ENCODE measurements at regions of chr7 and their contacts with region 1.

Region 1: GRCh38 chr7:50610521-50611277 is 45.5 kb upstream of the DDC start:
- DNase-seq: peak; percentile 34
- H3K4me3 Mint-ChIP-seq: no peak overlapping the region
- H3K27ac Mint-ChIP-seq: no peak overlapping the region
- H3K4me1 Mint-ChIP-seq: peaks cover 37% of the 10 kb centered on the region
- H3K27me3 Mint-ChIP-seq: peaks cover 18% of the 10 kb centered on the region

Region 2: DNA sequence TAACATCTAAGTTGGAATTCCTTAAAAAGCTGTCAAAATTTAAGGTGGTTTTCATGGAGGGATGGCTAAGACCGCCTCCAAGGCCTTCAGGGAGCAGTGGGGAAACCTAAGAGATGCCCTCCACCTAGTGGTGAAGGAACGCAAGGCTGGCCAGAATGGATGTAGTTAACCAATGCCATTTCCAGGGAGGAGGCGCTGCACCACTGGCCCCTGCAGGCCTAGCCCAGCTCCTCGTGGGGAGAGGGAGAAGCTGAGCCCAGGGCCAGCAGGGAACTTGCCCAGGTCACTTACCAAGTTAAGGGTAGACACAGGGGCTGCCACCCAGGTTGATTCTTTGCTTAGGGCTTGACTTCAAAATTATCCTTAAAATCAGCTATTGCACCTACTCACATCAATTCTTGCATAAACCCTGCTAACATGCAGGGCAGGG is 192.6 kb before region 1 on chr7:
- intact Hi-C with region 1: no loop called
- DNase-seq: peak; percentile 64
- H3K4me3 Mint-ChIP-seq: no peak overlapping the region
- H3K27ac Mint-ChIP-seq: no peak overlapping the region
- H3K4me1 Mint-ChIP-seq: peaks cover 32% of the 10 kb centered on the region
- H3K27me3 Mint-ChIP-seq: no peaks in the 10 kb centered on the region

Region 3: GRCh38 chr7:50595491-50596102 is 15.1 kb before region 1 on chr7:
- intact Hi-C with region 1: loop called (anchors 1 kb)
- DNase-seq: no peak
- H3K4me3 Mint-ChIP-seq: no peak overlapping the region
- H3K27ac Mint-ChIP-seq: no peak overlapping the region
- H3K4me1 Mint-ChIP-seq: peaks cover 20% of the 10 kb centered on the region
- H3K27me3 Mint-ChIP-seq: peaks cover 15% of the 10 kb centered on the region

Region 4: GRCh38 chr7:50679218-50680007 is 68.7 kb after region 1 on chr7:
- intact Hi-C with region 1: loop called (anchors 1 kb)
- DNase-seq: no peak
- H3K4me3 Mint-ChIP-seq: no peak overlapping the region
- H3K27ac Mint-ChIP-seq: no peak overlapping the region
- H3K4me1 Mint-ChIP-seq: no peaks in the 10 kb centered on the region
- H3K27me3 Mint-ChIP-seq: peaks cover 11% of the 10 kb centered on the region

Region 5: DNA sequence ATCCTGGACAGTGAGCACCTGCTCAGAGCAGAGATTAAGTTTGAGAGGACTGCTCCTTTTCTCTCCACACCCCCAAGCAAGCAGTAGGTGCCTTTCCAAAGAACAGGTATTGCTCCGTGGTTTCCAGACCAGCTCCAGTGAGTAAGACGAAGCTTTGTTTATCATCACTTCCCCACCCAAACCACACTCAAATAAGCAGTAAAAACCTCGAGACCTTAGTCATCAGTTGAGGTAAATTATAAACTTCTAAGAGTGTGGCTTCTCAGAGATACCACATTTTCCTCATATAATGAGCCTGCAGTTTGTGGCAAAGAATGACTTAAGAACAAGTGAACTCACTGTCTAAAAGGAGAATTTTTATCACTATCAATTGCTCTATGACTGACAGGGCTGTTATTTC is 222.0 kb after region 1 on chr7:
- intact Hi-C with region 1: loop called (anchors 2 kb)
- DNase-seq: peak; percentile 42
- H3K4me3 Mint-ChIP-seq: peak overlapping the region; percentile 45
- H3K27ac Mint-ChIP-seq: peak overlapping the region; percentile 30
- H3K4me1 Mint-ChIP-seq: peaks cover 45% of the 10 kb centered on the region
- H3K27me3 Mint-ChIP-seq: peaks cover 21% of the 10 kb centered on the region